Mammary epithelial cell (primary cell): ENCODE measurements at regions of chr1 and their contacts with region 1.

Region 1: GRCh38 chr1:111789666-111790316 is 34.1 kb downstream of the DDX20 start:
- DNase-seq: no peak
- H3K4me3 ChIP-seq: no peak overlapping the region
- H3K27ac ChIP-seq: no peak overlapping the region
- H3K4me1 ChIP-seq: no peaks in the 10 kb centered on the region
- H3K27me3 ChIP-seq: no peaks in the 10 kb centered on the region
- CTCF ChIP-seq: peak in 1 of 2 donors; percentile 29

Region 2: GRCh38 chr1:111880881-111881837 is 91.4 kb after region 1 on chr1:
- CTCF ChIA-PET with region 1: no interaction called
- dilution Hi-C with region 1: loop called (anchors 5 kb)
- in situ Hi-C with region 1: no loop called
- intact Hi-C with region 1: no loop called
- DNase-seq: no peak
- H3K4me3 ChIP-seq: no peak overlapping the region
- H3K27ac ChIP-seq: no peak overlapping the region
- H3K4me1 ChIP-seq: no peaks in the 10 kb centered on the region
- H3K27me3 ChIP-seq: no peaks in the 10 kb centered on the region
- CTCF ChIP-seq: no peak

Region 3: GRCh38 chr1:111955755-111956154 is 166.0 kb after region 1 on chr1:
- CTCF ChIA-PET with region 1: no interaction called
- dilution Hi-C with region 1: no loop called
- in situ Hi-C with region 1: loop called in 1 of 2 experiments (anchors 25 kb)
- intact Hi-C with region 1: loop called (anchors 1 kb)
- DNase-seq: peak; percentile 23
- H3K4me3 ChIP-seq: no peak overlapping the region
- H3K27ac ChIP-seq: no peak overlapping the region
- H3K4me1 ChIP-seq: peaks cover 10% of the 10 kb centered on the region
- H3K27me3 ChIP-seq: no peaks in the 10 kb centered on the region
- CTCF ChIP-seq: no peak

Region 4: GRCh38 chr1:112006416-112006815 is 216.6 kb after region 1 on chr1:
- CTCF ChIA-PET with region 1: no interaction called
- dilution Hi-C with region 1: no loop called
- in situ Hi-C with region 1: no loop called
- intact Hi-C with region 1: no loop called
- DNase-seq: no peak
- H3K4me3 ChIP-seq: no peak overlapping the region
- H3K27ac ChIP-seq: no peak overlapping the region
- H3K4me1 ChIP-seq: no peaks in the 10 kb centered on the region
- H3K27me3 ChIP-seq: peaks cover 5% of the 10 kb centered on the region
- CTCF ChIP-seq: no peak

Region 5: GRCh38 chr1:112581530-112582192 is 791.9 kb after region 1 on chr1:
- CTCF ChIA-PET with region 1: no interaction called
- dilution Hi-C with region 1: no loop called
- in situ Hi-C with region 1: no loop called
- intact Hi-C with region 1: no loop called
- DNase-seq: peak; percentile 9
- H3K4me3 ChIP-seq: no peak overlapping the region
- H3K27ac ChIP-seq: peak overlapping the region; percentile 22
- H3K4me1 ChIP-seq: no peaks in the 10 kb centered on the region
- H3K27me3 ChIP-seq: no peaks in the 10 kb centered on the region
- CTCF ChIP-seq: no peak